Prostate gland (tissue), 2 donors: ENCODE measurements at regions of chr13 and their contacts with region 1.

Region 1: DNA sequence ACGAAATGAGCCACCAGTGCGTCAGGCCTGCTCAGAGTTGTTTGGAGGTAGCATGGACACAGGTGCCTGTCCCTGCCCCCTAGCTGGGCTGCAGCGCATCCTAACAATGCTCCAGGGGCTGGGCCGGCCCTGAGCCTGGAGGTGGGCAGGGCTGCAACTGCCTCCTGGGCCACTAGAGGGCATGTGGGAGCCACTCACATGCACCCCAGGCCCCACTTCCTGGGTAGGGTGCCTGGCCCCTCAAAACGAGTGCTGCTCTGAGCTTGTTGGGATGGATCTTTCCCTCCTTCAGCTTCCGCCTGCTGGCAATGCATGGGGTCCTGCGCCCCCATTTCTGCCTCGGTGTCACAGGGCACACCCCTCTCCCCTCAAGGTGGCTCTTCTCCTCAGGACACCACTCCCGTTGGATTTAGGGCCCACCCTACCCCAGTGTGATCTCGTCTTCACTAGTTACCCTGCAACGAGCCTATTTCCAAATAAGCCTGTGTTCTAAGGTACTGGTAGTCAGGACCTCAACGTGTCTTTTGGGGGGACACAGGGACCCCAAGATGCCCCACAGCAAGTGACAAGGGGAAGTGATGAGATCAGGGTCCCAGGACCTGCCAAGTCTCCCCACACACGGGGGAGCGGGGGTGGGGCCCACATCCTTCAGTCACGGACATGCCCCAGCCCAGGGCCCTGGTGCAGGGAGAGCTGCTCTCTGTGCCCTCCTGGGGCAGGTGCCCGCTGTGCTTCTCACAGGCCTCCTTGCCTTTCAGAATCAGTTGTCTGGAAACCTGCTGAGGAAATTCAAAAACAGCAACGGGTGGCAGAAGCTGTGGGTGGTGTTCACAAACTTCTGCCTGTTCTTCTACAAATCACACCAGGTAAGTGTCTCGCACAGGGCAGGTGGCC is 131.3 kb downstream of the STK24 start:
- DNase-seq: peak; percentile 55
- H3K4me3 ChIP-seq: no peak overlapping the region
- H3K27ac ChIP-seq: peak overlapping the region; percentile 47 to 50
- H3K4me1 ChIP-seq: peaks cover 4% of the 10 kb centered on the region
- H3K27me3 ChIP-seq: no peaks in the 10 kb centered on the region
- CTCF ChIP-seq: peak; percentile 88 to 98 (median 93)
- POLR2A ChIP-seq: no peak

Region 2: GRCh38 chr13:97855570-97856303 is 589.9 kb before region 1 on chr13:
- intact Hi-C with region 1: loop called (anchors 10 kb)
- DNase-seq: peak; percentile 47
- H3K4me3 ChIP-seq: no peak overlapping the region
- H3K27ac ChIP-seq: no peak overlapping the region
- H3K4me1 ChIP-seq: no peaks in the 10 kb centered on the region
- H3K27me3 ChIP-seq: no peaks in the 10 kb centered on the region
- CTCF ChIP-seq: peak; percentile 27 to 83 (median 74)
- POLR2A ChIP-seq: no peak

Region 3: GRCh38 chr13:98576963-98577822 is 131.6 kb after region 1 on chr13 and contains the start of gene STK24:
- intact Hi-C with region 1: loop called (anchors 5 kb)
- DNase-seq: peak; percentile 65
- H3K4me3 ChIP-seq: peak within 1 kb of the TSS; percentile 92
- H3K27ac ChIP-seq: peak within 1 kb of the TSS; percentile 96 to 97
- H3K4me1 ChIP-seq: no peaks in the 10 kb centered on the region
- H3K27me3 ChIP-seq: no peaks in the 10 kb centered on the region
- CTCF ChIP-seq: no peak
- POLR2A ChIP-seq: peak; percentile 11
- total RNA-seq, gene STK24: 80.5 to 187 TPM

Region 4: DNA sequence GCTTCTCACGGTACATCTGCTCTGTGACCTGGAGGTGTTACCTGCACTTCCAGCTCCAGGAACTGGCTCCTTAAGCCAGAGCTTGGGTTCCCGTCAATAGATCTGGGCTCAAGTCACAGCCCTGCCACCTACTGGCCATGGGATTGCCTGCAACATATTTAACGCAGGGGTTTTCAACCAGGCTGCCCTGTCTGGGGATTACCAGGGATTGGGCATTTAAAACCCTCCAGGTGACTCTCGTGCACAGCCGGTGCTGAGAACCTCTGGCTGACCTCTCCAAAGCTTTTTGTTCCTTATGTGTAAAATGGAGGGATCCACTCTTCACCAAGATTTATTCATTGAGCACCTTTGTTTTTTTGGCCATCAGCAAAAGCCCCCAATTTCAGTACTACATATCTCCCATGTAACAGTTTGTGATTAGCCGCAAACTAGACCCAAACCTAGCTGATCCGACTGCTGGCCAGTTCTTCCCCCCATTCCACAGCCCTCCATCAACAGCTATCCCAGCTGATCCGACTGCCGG is 207.9 kb after region 1 on chr13:
- intact Hi-C with region 1: loop called (anchors 2 kb)
- DNase-seq: peak; percentile 83
- H3K4me3 ChIP-seq: no peak overlapping the region
- H3K27ac ChIP-seq: no peak overlapping the region
- H3K4me1 ChIP-seq: no peaks in the 10 kb centered on the region
- H3K27me3 ChIP-seq: no peaks in the 10 kb centered on the region
- CTCF ChIP-seq: peak; percentile 82 to 94 (median 91)
- POLR2A ChIP-seq: no peak

Region 5: DNA sequence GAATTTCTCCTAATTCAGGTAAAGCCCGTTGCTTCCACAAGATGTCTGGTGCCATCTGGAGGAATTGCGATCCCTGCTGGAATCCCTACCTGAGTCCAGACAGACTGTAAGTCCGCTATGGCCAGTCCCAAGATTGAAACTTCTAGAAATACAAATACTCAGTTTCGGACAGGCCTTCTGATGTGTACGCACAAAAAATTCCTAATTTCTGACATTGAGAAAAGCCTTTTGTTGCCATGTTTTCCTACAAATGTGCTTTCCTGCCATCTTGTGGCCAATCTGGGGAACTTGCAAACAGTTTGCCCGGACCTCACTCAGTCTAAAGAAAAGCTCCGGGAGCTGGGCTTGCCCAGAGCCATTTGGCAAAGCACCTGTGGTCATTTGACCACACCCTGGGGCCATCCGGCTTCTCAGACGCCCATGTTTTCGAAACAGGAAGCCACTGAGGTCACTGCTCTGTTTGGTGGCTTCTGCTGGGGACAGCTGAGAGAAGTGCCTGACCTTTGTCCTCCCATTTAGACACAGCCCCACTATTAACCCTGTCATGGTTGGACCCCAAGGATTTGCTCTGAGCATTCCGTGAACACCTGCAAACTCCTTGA is 227.5 kb after region 1 on chr13:
- intact Hi-C with region 1: loop called (anchors 5 kb)
- DNase-seq: peak; percentile 54
- H3K4me3 ChIP-seq: no peak overlapping the region
- H3K27ac ChIP-seq: no peak overlapping the region
- H3K4me1 ChIP-seq: no peaks in the 10 kb centered on the region
- H3K27me3 ChIP-seq: no peaks in the 10 kb centered on the region
- CTCF ChIP-seq: peak; percentile 63 to 92 (median 77)
- POLR2A ChIP-seq: no peak

Region 6: GRCh38 chr13:98842864-98843481 is 397.4 kb after region 1 on chr13:
- intact Hi-C with region 1: loop called (anchors 10 kb)
- DNase-seq: peak; percentile 46
- H3K4me3 ChIP-seq: no peak overlapping the region
- H3K27ac ChIP-seq: no peak overlapping the region
- H3K4me1 ChIP-seq: no peaks in the 10 kb centered on the region
- H3K27me3 ChIP-seq: no peaks in the 10 kb centered on the region
- CTCF ChIP-seq: peak; percentile 74 to 83 (median 76)
- POLR2A ChIP-seq: no peak